B cell (primary cell): ENCODE measurements at regions of chr19 and their contacts with region 1.

Region 1: DNA sequence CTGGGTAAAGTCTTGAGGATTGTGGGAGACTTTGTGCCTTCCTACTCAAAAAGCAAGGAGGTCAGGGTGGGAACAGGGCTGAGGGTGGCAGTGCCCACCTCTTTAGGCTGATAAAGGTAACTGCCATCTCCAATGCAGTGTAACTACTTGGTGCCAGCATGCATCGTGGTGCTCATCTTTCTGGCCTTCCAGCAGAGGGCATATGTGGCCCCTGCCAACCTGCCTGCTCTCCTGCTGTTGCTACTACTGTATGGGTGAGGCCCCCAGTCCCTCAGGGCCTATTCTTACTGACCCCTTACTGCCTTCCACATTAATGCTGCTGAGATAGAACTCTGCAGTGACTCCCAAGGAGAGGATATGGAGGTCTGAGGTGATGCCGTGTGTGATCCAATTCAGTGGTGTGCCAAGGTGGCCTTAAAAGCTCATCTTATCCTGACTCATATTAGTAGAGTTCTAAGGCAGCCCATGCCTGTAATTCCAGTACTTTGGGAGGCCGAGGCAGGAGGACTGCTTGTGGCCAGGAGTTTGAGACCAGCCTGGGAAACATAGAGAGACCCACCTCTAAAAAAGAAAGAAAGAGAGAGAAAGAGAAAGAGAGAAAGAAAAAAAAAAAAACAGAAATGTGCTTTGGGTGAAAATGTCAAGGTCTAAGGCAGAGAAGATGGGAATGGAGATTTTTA is 9.7 kb upstream of the ARHGAP45 start:
- DNase-seq: peak; percentile 73
- ATAC-seq: peak; percentile 72
- H3K4me3 ChIP-seq: no peak overlapping the region
- H3K4me3 Mint-ChIP-seq: no peak overlapping the region
- H3K27ac ChIP-seq: peak overlapping the region in 1 of 2 donors; percentile 27
- H3K27ac Mint-ChIP-seq: peak overlapping the region; percentile 84
- H3K4me1 ChIP-seq: peaks cover 0 to 21% of the 10 kb centered on the region in 2 donors
- H3K4me1 Mint-ChIP-seq: peaks cover 15% of the 10 kb centered on the region
- H3K27me3 ChIP-seq: no peaks in the 10 kb centered on the region
- H3K27me3 Mint-ChIP-seq: no peaks in the 10 kb centered on the region
- CTCF ChIP-seq: no peak

Region 2: DNA sequence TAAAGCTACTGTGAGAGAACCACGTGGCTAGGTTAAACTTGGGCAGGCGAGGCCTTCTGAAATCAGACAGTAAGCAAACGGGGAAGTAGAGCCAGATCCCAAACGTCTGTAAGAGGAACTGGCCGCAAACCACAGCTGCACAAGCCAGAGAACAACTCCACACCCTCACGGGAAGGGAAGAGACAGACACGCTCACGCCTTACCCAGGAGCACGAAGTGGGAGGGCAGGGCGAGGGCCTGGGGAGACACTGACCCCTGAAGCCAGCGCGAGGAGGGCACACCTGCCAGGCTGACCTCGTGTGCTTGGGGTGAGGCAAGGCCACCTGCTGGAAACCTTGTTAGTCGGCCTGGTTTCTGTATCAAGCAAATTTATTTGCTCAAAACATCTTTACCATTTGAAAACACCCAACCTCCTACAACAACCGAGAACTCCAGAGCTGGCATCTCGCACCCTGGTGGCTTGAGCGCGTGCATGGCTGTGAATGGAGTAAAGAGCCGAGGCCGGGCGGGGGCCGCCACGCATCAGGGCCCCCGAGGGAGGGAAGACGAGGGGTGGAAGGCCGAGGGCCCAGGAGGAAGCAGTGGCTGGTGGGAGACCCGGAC is 30.6 kb after region 1 on chr19:
- CTCF ChIA-PET with region 1: interaction called, 22 read pairs
- POLR2A ChIA-PET with region 1: interaction called, 9 read pairs
- intact Hi-C with region 1: no loop called
- DNase-seq: peak; percentile 86
- ATAC-seq: peak; percentile 61
- H3K4me3 ChIP-seq: peak overlapping the region in 2 of 5 experiments; percentile 1 to 8
- H3K4me3 Mint-ChIP-seq: peak overlapping the region; percentile 69
- H3K27ac ChIP-seq: peak overlapping the region; percentile 29 to 82
- H3K27ac Mint-ChIP-seq: peak overlapping the region; percentile 91
- H3K4me1 ChIP-seq: peaks cover 34 to 42% of the 10 kb centered on the region in 2 donors
- H3K4me1 Mint-ChIP-seq: peaks cover 35% of the 10 kb centered on the region
- H3K27me3 ChIP-seq: no peaks in the 10 kb centered on the region
- H3K27me3 Mint-ChIP-seq: no peaks in the 10 kb centered on the region
- CTCF ChIP-seq: peak; percentile 15

Region 3: DNA sequence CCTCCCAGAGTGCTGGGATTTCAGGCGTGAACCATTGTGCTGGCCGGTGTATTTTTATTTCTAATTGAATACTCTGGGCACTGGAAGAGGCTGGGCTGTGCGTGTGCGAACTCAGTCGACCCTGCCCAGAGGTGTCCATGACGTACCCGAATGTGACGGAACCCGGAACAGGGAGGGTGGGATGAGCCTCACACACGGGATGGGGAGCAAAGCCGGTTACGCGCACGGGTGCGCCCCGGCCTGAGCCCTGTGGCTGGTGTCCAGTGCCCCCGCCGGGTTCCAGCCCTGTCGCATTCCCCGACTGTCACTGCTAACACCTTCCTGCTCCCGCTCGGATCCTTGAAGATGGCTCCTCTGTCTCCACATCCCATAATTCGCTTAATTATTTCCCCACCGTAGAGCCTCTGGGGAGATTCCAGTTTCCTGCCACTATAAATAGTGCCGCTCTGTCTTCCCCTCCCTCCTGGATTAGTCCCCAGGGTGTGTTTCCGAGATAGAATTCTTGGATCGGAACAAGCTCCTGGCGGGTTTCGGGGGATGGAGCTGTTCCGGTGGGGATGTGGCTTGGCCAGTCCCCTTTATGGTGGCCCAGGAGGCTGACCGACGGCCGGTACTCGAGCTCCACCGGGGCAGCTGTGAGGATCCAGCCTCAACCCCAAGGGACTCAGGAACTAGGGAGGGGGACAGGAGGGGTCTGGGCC is 94.8 kb after region 1 on chr19:
- CTCF ChIA-PET with region 1: no interaction called
- POLR2A ChIA-PET with region 1: no interaction called
- intact Hi-C with region 1: no loop called
- DNase-seq: no peak
- ATAC-seq: no peak
- H3K4me3 ChIP-seq: no peak overlapping the region
- H3K4me3 Mint-ChIP-seq: no peak overlapping the region
- H3K27ac ChIP-seq: no peak overlapping the region
- H3K27ac Mint-ChIP-seq: no peak overlapping the region
- H3K4me1 ChIP-seq: no peaks in the 10 kb centered on the region
- H3K4me1 Mint-ChIP-seq: no peaks in the 10 kb centered on the region
- H3K27me3 ChIP-seq: no peaks in the 10 kb centered on the region
- H3K27me3 Mint-ChIP-seq: no peaks in the 10 kb centered on the region
- CTCF ChIP-seq: no peak

Region 4: GRCh38 chr19:1189419-1189818 is 132.1 kb after region 1 on chr19:
- CTCF ChIA-PET with region 1: interaction called, 4 read pairs
- POLR2A ChIA-PET with region 1: no interaction called
- intact Hi-C with region 1: loop called (anchors 5 kb)
- DNase-seq: no peak
- ATAC-seq: no peak
- H3K4me3 ChIP-seq: no peak overlapping the region
- H3K4me3 Mint-ChIP-seq: no peak overlapping the region
- H3K27ac ChIP-seq: no peak overlapping the region
- H3K27ac Mint-ChIP-seq: no peak overlapping the region
- H3K4me1 ChIP-seq: no peaks in the 10 kb centered on the region
- H3K4me1 Mint-ChIP-seq: no peaks in the 10 kb centered on the region
- H3K27me3 ChIP-seq: no peaks in the 10 kb centered on the region
- H3K27me3 Mint-ChIP-seq: no peaks in the 10 kb centered on the region
- CTCF ChIP-seq: no peak

Region 5: DNA sequence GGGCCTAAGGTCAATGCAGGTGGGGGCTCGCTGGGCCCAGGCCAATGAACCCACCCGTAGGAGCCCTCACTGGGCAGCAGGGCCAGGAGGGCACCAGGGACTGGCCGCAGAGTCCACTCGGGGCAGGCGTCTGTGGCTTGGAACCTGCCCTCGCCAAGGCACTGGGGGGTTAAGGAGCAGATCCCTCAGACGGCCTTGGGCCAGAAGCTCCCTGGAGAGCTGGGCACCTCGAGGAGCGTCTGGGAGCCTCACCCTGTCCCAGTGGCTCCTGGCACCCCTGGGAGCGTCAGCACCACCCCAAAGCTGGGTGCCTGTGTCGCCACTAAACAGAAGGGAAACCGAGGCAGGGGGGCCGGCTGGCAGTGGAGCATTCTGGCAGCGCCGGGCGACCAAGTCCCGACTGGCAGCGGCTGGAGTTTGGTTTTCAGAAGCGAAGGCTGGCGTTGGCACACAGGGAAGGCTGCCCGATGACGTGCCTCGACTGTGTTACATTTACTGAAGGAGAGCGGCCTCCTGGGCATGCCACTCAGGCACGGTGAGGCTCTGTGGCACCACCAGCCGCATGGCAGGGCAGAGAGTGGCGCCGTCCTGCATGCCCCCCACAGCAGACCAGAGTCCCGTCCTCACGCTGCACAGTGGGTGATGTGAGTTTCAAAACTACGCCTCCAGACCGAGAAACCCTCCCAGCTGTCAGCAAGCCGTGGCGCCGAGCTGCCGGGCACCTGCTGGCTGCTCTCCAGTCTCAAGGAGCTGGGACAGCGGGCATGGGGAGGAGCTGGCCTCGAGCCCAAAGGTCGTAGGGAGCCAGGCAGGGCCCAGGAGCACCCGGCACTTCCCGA is 520.0 kb after region 1 on chr19:
- CTCF ChIA-PET with region 1: no interaction called
- POLR2A ChIA-PET with region 1: no interaction called
- intact Hi-C with region 1: no loop called
- DNase-seq: no peak
- ATAC-seq: no peak
- H3K4me3 ChIP-seq: no peak overlapping the region
- H3K4me3 Mint-ChIP-seq: no peak overlapping the region
- H3K27ac ChIP-seq: no peak overlapping the region
- H3K27ac Mint-ChIP-seq: no peak overlapping the region
- H3K4me1 ChIP-seq: no peaks in the 10 kb centered on the region
- H3K4me1 Mint-ChIP-seq: no peaks in the 10 kb centered on the region
- H3K27me3 ChIP-seq: no peaks in the 10 kb centered on the region
- H3K27me3 Mint-ChIP-seq: no peaks in the 10 kb centered on the region
- CTCF ChIP-seq: no peak